H1 (cell line): ENCODE measurements at regions of chr1 and their contacts with region 1.

Region 1: GRCh38 chr1:2091611-2092604 is 41.7 kb downstream of the PRKCZ start:
- DNase-seq: peak in 1 of 2 experiments; percentile 92
- H3K4me3 ChIP-seq: no peak overlapping the region
- H3K27ac ChIP-seq: no peak overlapping the region
- H3K4me1 ChIP-seq: peaks cover 0 to 12% (median 7%) of the 10 kb centered on the region in 4 experiments; a peak in 4 of 7 replicates
- H3K27me3 ChIP-seq: no peaks in the 10 kb centered on the region
- CTCF ChIP-seq: peak in 2 of 3 experiments; percentile 62 to 83; a peak in 3 of 4 replicates
- EP300 ChIP-seq: no peak
- POLR2A ChIP-seq: no peak
- RAD21 ChIP-seq: peak; percentile 45 to 56

Region 2: DNA sequence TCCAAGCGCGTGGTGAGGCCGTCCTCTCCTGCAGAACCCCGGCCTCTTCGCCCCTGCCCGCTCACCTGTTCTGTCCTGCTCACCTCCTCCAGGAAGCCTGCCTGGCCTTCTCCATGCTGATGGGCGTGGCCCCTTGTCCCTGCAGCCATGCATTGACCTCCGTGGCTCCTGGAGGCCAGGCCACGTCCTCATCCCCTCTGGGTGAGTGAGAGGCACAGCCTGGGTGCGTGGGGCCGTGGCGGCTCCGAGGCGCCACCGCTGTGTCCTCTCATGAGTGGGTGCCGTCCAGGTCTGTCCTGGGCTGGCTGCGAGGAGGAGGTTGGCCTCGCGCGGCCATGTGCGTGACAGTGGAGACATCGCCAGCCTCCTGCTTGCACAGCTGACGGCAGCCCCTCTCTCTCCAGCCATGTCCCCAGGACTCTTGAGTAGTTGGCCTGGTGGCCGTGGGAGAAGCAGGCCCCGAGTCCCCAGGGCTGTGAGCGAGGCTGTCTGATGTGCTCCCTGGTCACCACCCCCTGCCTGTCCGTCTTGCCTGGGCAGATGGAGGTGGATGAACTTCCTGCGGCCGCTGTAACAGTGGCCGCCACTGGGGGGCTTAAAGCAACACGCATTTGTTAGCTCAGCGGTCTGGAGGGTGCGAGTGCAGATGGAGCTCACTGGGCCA is 16.4 kb after region 1 on chr1:
- CTCF ChIA-PET with region 1: interaction called, 18 read pairs
- POLR2A ChIA-PET with region 1: no interaction called
- DNase-seq: peak; percentile 47 to 82
- H3K4me3 ChIP-seq: no peak overlapping the region
- H3K27ac ChIP-seq: no peak overlapping the region
- H3K4me1 ChIP-seq: no peaks in the 10 kb centered on the region; a peak in 1 of 7 replicates
- H3K27me3 ChIP-seq: no peaks in the 10 kb centered on the region
- CTCF ChIP-seq: peak in 2 of 3 experiments; percentile 80 to 87; a peak in 3 of 4 replicates
- EP300 ChIP-seq: no peak
- POLR2A ChIP-seq: no peak
- RAD21 ChIP-seq: peak; percentile 69 to 79

Region 3: DNA sequence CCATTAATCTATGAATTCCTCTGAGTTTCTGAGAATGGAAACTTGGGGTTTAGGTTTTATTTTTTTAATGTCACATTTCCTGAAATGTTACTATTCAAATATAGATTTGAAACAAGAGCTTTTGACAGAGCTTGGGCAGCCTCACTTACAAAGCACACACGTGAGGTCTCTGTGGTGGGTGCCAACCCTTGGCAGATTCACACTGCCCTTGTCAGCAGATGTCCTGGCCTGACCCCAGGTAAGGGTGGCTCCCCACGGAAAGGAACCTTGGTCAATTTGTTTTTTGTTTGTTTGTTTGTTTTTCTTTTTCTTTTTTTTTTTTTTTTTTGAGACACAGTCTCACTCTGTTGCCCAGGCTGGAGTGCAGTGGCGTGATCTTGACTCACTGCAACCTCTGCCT is 49.1 kb after region 1 on chr1:
- CTCF ChIA-PET with region 1: interaction called, 18 read pairs
- POLR2A ChIA-PET with region 1: no interaction called
- DNase-seq: no peak
- H3K4me3 ChIP-seq: no peak overlapping the region
- H3K27ac ChIP-seq: no peak overlapping the region
- H3K4me1 ChIP-seq: no peaks in the 10 kb centered on the region
- H3K27me3 ChIP-seq: no peaks in the 10 kb centered on the region
- CTCF ChIP-seq: no peak
- EP300 ChIP-seq: no peak
- POLR2A ChIP-seq: no peak
- RAD21 ChIP-seq: no peak